ENCODE measurements at regions of chr3 and their contacts with region 1.

Region 1: DNA sequence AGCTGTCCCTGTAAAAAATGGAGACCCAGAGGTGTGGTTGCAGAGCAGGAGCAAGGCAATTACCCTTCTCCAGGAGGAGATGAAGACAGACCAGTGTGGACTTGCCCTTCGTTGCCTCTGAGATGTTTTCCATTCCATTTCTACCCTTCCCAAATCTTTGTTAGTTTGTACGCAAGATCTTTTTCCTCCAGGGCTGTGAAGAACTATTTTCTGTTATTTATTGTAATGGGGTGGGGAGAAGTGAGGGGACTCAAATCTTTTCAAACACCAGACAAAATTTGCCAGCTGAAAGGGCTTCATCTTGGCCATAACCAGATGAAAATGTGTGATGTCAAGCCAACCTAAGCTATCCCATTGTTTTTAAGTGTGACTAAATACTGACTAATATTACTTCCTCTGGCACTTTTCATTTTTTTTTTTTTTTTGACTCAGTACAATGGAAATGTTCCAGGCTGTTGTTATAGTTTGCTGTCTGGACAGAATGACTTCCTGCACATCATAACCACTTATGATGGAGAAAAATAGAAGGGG is 271.3 kb upstream of the TPRG1 start:
- DNase-seq: peak; percentile 94
- H3K4me3 ChIP-seq: peak overlapping the region in 1 of 3 experiments; percentile 35
- H3K27ac ChIP-seq: peak overlapping the region; percentile 100
- H3K4me1 ChIP-seq: peaks cover 37% of the 10 kb centered on the region
- H3K27me3 ChIP-seq: no peaks in the 10 kb centered on the region
- CTCF ChIP-seq: no peak
- POLR2A ChIP-seq: no peak

Region 2: GRCh38 chr3:188760408-188760807 is 140.1 kb before region 1 on chr3:
- CTCF ChIA-PET with region 1: no interaction called
- POLR2A ChIA-PET with region 1: no interaction called
- dilution Hi-C with region 1: no loop called
- intact Hi-C with region 1: no loop called
- DNase-seq: no peak
- H3K4me3 ChIP-seq: no peak overlapping the region
- H3K27ac ChIP-seq: no peak overlapping the region
- H3K4me1 ChIP-seq: no peaks in the 10 kb centered on the region
- H3K27me3 ChIP-seq: no peaks in the 10 kb centered on the region
- CTCF ChIP-seq: no peak
- POLR2A ChIP-seq: no peak

Region 3: GRCh38 chr3:188788621-188789081 is 111.8 kb before region 1 on chr3:
- CTCF ChIA-PET with region 1: no interaction called
- POLR2A ChIA-PET with region 1: no interaction called
- dilution Hi-C with region 1: no loop called
- intact Hi-C with region 1: loop called (anchors 1 kb)
- DNase-seq: peak; percentile 90
- H3K4me3 ChIP-seq: no peak overlapping the region
- H3K27ac ChIP-seq: peak overlapping the region; percentile 85
- H3K4me1 ChIP-seq: peaks cover 19% of the 10 kb centered on the region
- H3K27me3 ChIP-seq: no peaks in the 10 kb centered on the region
- CTCF ChIP-seq: no peak
- POLR2A ChIP-seq: no peak

Region 4: DNA sequence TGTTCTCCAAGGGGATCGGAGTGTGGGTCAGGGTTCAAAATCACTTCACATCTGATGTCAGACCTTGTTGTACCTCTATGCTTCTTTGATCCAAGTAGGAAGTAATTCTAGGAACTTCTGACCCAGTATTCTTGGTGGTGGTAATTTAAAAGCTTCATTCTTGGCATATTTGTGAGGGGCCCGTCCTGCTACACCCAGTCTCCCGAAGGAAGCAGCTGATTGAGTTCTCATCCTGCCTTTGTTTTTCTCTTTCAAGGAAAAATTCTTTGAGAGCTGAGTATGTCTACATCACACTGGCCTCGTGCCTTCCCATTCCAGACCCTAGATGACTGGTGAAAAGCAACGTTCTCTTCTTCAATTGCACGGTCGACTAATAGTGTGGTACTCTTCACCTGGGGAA is 36.9 kb after region 1 on chr3:
- CTCF ChIA-PET with region 1: interaction called, 4 read pairs
- POLR2A ChIA-PET with region 1: no interaction called
- dilution Hi-C with region 1: no loop called
- intact Hi-C with region 1: loop called (anchors 1 kb)
- DNase-seq: peak; percentile 90
- H3K4me3 ChIP-seq: no peak overlapping the region
- H3K27ac ChIP-seq: no peak overlapping the region
- H3K4me1 ChIP-seq: peaks cover 18% of the 10 kb centered on the region
- H3K27me3 ChIP-seq: no peaks in the 10 kb centered on the region
- CTCF ChIP-seq: no peak
- POLR2A ChIP-seq: no peak

Measured in endothelial cell of umbilical vein (primary cell).